OCI-LY7 (cell line): ENCODE measurements at regions of chr12 and their contacts with region 1.

Region 1: GRCh38 chr12:1234073-1234472 is 243.1 kb downstream of the ERC1 start:
- DNase-seq: no peak
- H3K4me3 ChIP-seq: no peak overlapping the region
- H3K27ac ChIP-seq: no peak overlapping the region
- H3K4me1 ChIP-seq: no peaks in the 10 kb centered on the region
- CTCF ChIP-seq: no peak

Region 2: GRCh38 chr12:642633-643474 is 591.2 kb before region 1 on chr12:
- CTCF ChIA-PET with region 1: no interaction called
- POLR2A ChIA-PET with region 1: no interaction called
- intact Hi-C with region 1: no loop called
- DNase-seq: peak; percentile 87
- H3K4me3 ChIP-seq: peak overlapping the region; percentile 71
- H3K27ac ChIP-seq: peak overlapping the region; percentile 69
- H3K4me1 ChIP-seq: peaks cover 41% of the 10 kb centered on the region
- CTCF ChIP-seq: peak; percentile 46

Region 3: GRCh38 chr12:1769809-1770494 is 535.9 kb after region 1 on chr12:
- CTCF ChIA-PET with region 1: no interaction called
- POLR2A ChIA-PET with region 1: interaction called, 10 read pairs
- intact Hi-C with region 1: no loop called
- DNase-seq: no peak
- H3K4me3 ChIP-seq: no peak overlapping the region
- H3K27ac ChIP-seq: no peak overlapping the region
- H3K4me1 ChIP-seq: no peaks in the 10 kb centered on the region
- CTCF ChIP-seq: no peak